ENCODE measurements at regions of chr13 and their contacts with region 1.

Region 1: DNA sequence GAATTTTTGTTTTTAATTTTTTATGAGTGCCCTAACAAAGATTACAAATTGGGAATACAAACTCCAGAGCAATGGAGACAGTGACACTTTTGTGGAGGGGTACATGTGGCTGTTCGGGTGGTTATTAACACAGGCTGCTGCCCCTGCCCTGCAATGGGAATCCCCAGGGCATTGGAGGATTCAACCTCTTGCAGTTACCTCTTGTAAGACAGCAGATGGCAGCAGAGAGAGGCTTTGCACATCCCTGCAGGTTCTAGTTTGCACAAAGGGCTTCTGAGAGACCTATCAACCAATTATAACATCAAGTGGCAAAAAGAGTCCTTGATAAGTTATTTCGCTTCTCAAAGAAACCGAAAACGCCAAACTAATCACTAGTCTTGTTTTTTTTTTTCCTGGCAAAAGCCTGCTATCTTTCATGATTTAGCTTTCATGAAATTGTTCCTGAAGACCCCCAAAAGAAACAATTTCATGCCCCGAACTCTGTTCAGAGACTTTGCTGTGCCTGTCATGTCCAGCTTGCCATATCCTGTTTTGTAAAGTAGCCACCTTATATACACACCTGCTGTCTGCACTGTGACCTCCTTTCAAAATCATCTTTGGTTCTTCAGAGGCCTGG is 10.4 kb downstream of the GJB2 start:
- DNase-seq: no peak
- H3K4me3 ChIP-seq: no peak overlapping the region
- H3K27ac ChIP-seq: no peak overlapping the region
- H3K4me1 ChIP-seq: peaks cover 3% of the 10 kb centered on the region
- H3K27me3 ChIP-seq: no peaks in the 10 kb centered on the region
- CTCF ChIP-seq: peak; percentile 82 to 88 (median 85)

Region 2: GRCh38 chr13:20247403-20247802 is 65.1 kb after region 1 on chr13:
- dilution Hi-C with region 1: no loop called
- DNase-seq: no peak
- H3K4me3 ChIP-seq: no peak overlapping the region
- H3K27ac ChIP-seq: no peak overlapping the region
- H3K4me1 ChIP-seq: peaks cover 13% of the 10 kb centered on the region
- H3K27me3 ChIP-seq: no peaks in the 10 kb centered on the region
- CTCF ChIP-seq: no peak

Region 3: GRCh38 chr13:20340759-20341171 is 158.4 kb after region 1 on chr13:
- dilution Hi-C with region 1: no loop called
- DNase-seq: no peak
- H3K4me3 ChIP-seq: no peak overlapping the region
- H3K27ac ChIP-seq: peak overlapping the region; percentile 54
- H3K4me1 ChIP-seq: peaks cover 30% of the 10 kb centered on the region
- H3K27me3 ChIP-seq: no peaks in the 10 kb centered on the region
- CTCF ChIP-seq: no peak

Region 4: DNA sequence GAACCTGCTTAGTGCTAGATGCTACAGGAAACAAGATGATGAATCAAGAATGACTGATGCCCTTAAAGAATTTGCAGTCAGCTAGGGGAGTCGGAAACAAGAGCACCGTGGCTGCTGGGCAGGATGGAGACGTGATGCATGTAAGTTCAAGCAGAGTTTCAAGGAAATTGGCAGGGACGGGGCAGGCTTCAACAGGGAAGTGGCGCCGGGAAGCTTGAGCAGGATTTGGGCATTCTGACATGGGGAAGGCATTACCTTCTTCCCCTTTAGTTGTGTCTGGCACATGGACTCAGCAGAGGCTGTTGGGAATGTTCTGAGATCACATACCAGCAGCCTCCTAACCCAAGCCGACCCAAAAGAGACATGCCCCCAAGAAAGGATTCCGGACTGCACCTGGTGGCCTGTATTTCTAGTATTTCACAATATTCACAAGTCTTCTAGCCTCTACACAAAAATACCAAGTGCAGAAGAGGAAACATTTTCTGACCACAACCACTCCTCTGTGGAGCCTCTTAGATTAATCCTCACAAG is 205.2 kb after region 1 on chr13:
- dilution Hi-C with region 1: loop called (anchors 25 kb)
- DNase-seq: no peak
- H3K4me3 ChIP-seq: peak overlapping the region in 2 of 3 experiments; percentile 17 to 44
- H3K27ac ChIP-seq: peak overlapping the region; percentile 88
- H3K4me1 ChIP-seq: peaks cover 22% of the 10 kb centered on the region
- H3K27me3 ChIP-seq: no peaks in the 10 kb centered on the region
- CTCF ChIP-seq: no peak

Region 5: DNA sequence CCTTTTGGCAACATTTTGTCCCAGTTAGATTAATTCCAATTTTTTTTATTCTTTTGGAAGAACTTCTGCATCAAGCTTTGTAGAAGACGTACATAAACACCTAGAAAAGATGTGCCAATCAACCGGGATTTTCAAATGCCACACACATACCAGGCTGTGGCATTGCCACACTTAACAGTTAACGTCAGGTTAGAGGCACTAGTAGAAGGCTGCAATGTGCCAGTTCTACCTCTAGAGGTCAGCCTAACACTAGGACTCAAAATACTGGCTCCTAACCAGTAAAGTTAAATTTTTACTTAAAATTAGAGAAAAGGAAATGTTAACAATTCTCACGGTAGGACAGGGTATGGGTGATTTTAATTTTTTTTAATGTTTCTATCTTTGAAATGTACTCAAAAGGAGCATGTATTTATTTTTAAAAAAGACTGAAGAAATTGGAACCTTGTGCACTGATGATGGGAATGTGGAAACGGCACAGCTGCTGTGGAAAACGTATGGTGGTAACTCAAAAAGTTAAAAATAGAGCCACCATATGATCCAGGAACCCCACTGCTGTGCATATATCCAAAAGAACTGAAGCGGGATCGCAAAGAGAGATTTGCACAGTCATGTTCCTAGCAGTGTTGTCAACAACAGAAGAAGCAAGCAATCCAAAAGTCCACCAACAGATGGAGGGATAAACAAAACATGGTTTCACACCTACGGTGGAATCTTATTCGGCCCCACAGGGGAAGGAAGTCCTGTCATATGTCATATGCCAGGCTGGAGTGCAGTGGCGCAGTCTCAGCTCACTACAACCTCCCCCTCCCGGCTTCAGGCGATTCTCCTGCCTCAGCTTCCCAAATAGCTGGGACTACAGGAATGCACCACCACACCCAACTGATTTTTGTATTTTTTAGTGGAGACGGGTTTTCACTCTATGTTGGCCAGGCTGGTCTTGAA is 313.0 kb after region 1 on chr13:
- dilution Hi-C with region 1: loop called (anchors 25 kb)
- DNase-seq: no peak
- H3K4me3 ChIP-seq: no peak overlapping the region
- H3K27ac ChIP-seq: no peak overlapping the region
- H3K4me1 ChIP-seq: peaks cover 13% of the 10 kb centered on the region
- H3K27me3 ChIP-seq: no peaks in the 10 kb centered on the region
- CTCF ChIP-seq: peak; percentile 73 to 77 (median 77)

Measured in keratinocyte (primary cell).